IMR-90 (cell line): ENCODE measurements at regions of chr3 and their contacts with region 1.

Region 1: GRCh38 chr3:9352917-9353752 is 9.7 kb upstream of the THUMPD3 start:
- DNase-seq: peak; percentile 79
- ATAC-seq: peak; percentile 77
- H3K4me3 ChIP-seq: no peak overlapping the region
- H3K27ac ChIP-seq: no peak overlapping the region
- H3K4me1 ChIP-seq: peaks cover 12% of the 10 kb centered on the region
- H3K27me3 ChIP-seq: no peaks in the 10 kb centered on the region
- CTCF ChIP-seq: peak; percentile 93
- POLR2A ChIP-seq: no peak
- RAD21 ChIP-seq: peak; percentile 91

Region 2: DNA sequence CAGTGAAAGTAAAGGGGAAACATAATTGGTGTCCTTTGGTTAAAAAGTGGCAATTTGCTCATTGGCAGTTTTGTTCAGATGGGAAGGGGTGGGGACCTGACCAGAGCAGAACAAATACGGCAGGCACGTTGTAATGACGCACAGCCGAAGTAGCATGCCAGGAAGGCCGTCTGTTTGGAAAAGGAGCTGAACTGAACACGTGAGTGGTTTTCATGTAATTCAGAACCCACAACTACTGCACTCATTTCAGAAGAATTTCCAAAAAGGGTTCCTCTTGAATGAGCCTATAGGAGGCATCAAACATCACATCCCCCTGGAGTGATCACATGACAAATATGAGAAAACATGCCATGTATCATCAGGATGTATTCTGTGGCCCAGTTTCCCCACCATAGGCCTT is 894.4 kb before region 1 on chr3:
- CTCF ChIA-PET with region 1: no interaction called
- POLR2A ChIA-PET with region 1: no interaction called
- dilution Hi-C with region 1: no loop called
- in situ Hi-C with region 1: loop called (anchors 25 kb)
- intact Hi-C with region 1: no loop called
- DNase-seq: peak; percentile 95
- ATAC-seq: peak; percentile 50
- H3K4me3 ChIP-seq: no peak overlapping the region
- H3K27ac ChIP-seq: peak overlapping the region; percentile 88; the same call in 1 of the 2 replicates
- H3K4me1 ChIP-seq: peaks cover 27% of the 10 kb centered on the region
- H3K27me3 ChIP-seq: no peaks in the 10 kb centered on the region
- CTCF ChIP-seq: no peak
- POLR2A ChIP-seq: no peak
- RAD21 ChIP-seq: no peak

Region 3: DNA sequence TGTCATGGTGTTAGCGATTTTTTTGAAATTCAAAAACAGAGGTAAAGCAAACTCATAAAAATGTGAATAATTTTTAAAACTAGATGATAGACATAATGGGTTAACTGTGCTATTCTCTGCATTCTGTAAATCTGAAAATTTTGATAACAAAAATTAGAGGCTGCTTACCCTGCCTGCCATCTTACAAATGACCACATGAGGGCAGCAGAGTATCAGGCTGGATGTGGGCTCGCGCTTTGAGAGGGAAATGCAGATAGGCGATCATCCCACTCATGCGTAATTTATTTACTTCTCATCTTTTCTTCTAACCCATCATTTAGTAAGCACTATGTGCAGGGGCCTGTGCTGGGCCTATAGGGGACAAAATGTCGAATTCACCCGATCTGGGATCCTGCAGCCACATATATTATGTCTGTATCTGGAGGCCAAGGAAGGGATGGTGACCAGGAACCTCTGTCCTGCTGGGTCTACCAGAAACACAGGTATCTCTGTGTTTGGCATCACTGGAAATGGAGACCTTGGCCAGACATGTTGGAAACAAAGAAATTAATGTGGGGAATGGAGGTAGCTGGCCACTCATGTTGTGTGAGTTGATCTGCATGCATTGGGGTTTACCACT is 382.1 kb before region 1 on chr3:
- CTCF ChIA-PET with region 1: no interaction called
- POLR2A ChIA-PET with region 1: no interaction called
- dilution Hi-C with region 1: no loop called
- in situ Hi-C with region 1: no loop called
- intact Hi-C with region 1: loop called (anchors 5 kb)
- DNase-seq: peak; percentile 63
- ATAC-seq: peak; percentile 94
- H3K4me3 ChIP-seq: no peak overlapping the region
- H3K27ac ChIP-seq: no peak overlapping the region
- H3K4me1 ChIP-seq: no peaks in the 10 kb centered on the region
- H3K27me3 ChIP-seq: peaks cover 2% of the 10 kb centered on the region; the same call in 1 of the 2 replicates
- CTCF ChIP-seq: peak; percentile 97
- POLR2A ChIP-seq: no peak
- RAD21 ChIP-seq: peak; percentile 97

Region 4: GRCh38 chr3:9422712-9423424 is 69.7 kb after region 1 on chr3:
- CTCF ChIA-PET with region 1: no interaction called
- POLR2A ChIA-PET with region 1: no interaction called
- dilution Hi-C with region 1: no loop called
- in situ Hi-C with region 1: no loop called
- intact Hi-C with region 1: loop called (anchors 2 kb)
- DNase-seq: peak; percentile 98
- ATAC-seq: peak; percentile 91
- H3K4me3 ChIP-seq: no peak overlapping the region
- H3K27ac ChIP-seq: peak overlapping the region; percentile 61
- H3K4me1 ChIP-seq: peaks cover 2% of the 10 kb centered on the region; the same call in 1 of the 2 replicates
- H3K27me3 ChIP-seq: no peaks in the 10 kb centered on the region
- CTCF ChIP-seq: peak; percentile 64
- POLR2A ChIP-seq: peak; percentile 65
- RAD21 ChIP-seq: peak; percentile 76

Region 5: DNA sequence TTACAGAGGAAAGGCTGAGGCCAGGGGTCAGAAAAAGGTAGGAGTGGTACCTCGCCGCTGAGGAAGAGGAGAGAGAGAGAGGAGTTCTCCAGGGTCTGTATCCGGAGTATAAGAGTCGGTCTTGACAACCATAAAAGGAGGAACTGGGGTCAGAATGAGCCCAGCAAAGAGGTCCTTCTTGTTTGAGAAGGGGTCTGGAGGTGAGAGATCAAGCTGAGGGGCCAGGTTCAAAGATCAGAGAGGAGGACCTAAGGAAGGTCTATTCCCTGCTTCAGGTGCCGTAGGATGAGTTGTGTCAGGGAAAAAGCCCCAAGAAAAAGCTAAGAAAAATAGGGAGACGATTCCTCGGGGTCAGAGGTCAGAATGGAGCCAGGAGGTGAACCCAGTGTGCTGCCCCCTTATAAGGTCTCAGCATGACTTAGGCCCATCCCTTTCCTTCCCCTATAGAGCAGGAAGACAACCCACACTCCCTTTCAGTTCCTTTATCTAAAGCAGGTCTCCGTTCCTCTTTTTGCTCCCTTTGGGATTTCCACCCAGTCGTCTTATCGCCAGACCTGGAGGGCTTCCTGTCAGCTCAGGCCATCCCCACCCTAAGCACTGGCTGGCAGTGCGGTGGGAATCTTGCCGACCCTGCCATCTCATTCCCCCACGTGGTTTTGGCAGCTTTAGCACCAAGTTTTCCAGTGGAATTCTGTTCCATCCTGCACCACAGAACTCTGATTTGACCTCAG is 296.8 kb after region 1 on chr3:
- CTCF ChIA-PET with region 1: no interaction called
- POLR2A ChIA-PET with region 1: no interaction called
- dilution Hi-C with region 1: no loop called
- in situ Hi-C with region 1: loop called (anchors 25 kb)
- intact Hi-C with region 1: loop called (anchors 5 kb)
- DNase-seq: no peak
- ATAC-seq: no peak; the same call in 1 of the 2 replicates
- H3K4me3 ChIP-seq: peak overlapping the region; percentile 99
- H3K27ac ChIP-seq: peak overlapping the region; percentile 52
- H3K4me1 ChIP-seq: peaks cover 4% of the 10 kb centered on the region
- H3K27me3 ChIP-seq: no peaks in the 10 kb centered on the region
- CTCF ChIP-seq: no peak
- POLR2A ChIP-seq: no peak
- RAD21 ChIP-seq: no peak

Region 6: GRCh38 chr3:9669720-9670432 is 316.7 kb after region 1 on chr3:
- CTCF ChIA-PET with region 1: no interaction called
- POLR2A ChIA-PET with region 1: interaction called, 4 read pairs
- dilution Hi-C with region 1: no loop called
- in situ Hi-C with region 1: loop called (anchors 25 kb)
- intact Hi-C with region 1: loop called (anchors 2 kb)
- DNase-seq: no peak
- ATAC-seq: peak; percentile 91
- H3K4me3 ChIP-seq: no peak overlapping the region
- H3K27ac ChIP-seq: no peak overlapping the region
- H3K4me1 ChIP-seq: no peaks in the 10 kb centered on the region; the same call in 1 of the 2 replicates
- H3K27me3 ChIP-seq: no peaks in the 10 kb centered on the region
- CTCF ChIP-seq: no peak
- POLR2A ChIP-seq: no peak
- RAD21 ChIP-seq: no peak

Region 7: GRCh38 chr3:10115326-10116137 is 762.4 kb after region 1 on chr3 and contains the start of gene BRK1:
- CTCF ChIA-PET with region 1: no interaction called
- POLR2A ChIA-PET with region 1: no interaction called
- dilution Hi-C with region 1: no loop called
- in situ Hi-C with region 1: no loop called
- intact Hi-C with region 1: no loop called
- DNase-seq: peak; percentile 97
- ATAC-seq: peak; percentile 98
- H3K4me3 ChIP-seq: peak within 1 kb of the TSS; percentile 72
- H3K27ac ChIP-seq: peak within 1 kb of the TSS; percentile 95
- H3K4me1 ChIP-seq: peaks cover 2% of the 10 kb centered on the region; the same call in 1 of the 2 replicates
- H3K27me3 ChIP-seq: no peaks in the 10 kb centered on the region
- CTCF ChIP-seq: no peak
- POLR2A ChIP-seq: peak; percentile 87
- RAD21 ChIP-seq: no peak
- total RNA-seq, gene BRK1: 81.4 and 123 TPM in 2 replicates